Tibial artery (tissue), 4 donors: ENCODE measurements at regions of chr17 and their contacts with region 1.

Region 1: DNA sequence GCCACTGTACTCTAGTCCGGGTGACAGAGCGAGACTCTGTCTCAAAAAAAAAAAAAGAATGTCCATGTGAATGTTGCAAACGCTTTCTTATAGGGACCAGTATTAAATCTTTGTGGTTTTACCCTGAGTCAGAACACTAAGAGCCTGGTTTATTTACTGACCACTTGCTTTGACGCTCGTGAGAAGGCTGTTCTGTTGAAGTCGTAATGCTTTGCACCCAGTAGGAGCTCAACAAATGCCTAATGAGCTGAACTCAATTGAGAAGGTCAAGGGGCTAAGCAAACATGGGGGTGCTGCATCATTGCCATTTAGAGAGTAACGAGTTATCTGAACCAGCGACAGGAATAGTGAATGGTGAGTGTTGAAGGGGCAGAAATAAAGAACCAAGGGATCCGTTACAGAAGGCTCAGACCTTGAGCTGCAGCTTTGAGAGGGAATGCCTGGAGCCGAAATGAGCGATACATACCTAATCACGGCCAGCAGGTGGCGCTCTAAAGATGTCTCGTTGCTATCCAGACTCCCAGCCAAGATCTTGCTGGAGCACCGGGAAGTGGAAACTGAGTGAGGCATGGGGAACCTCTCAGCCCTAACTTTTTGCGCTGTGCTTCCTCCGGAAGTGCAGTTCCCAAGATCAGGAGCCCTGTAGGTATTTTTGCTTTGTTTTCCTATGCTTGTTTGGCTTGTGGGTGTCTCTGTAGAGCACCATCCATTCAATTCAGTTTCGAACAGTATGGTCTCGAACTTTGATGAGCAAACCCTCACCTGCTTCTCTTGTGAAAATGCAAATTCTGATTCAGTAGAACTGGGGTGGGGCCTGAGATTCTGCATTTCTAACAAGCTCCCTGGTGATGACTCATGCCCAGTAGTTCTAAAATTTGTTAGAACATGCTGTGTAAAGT is 12.6 kb upstream of the RNF222 start:
- DNase-seq: peak; percentile 87 to 93
- H3K4me3 ChIP-seq: no peak overlapping the region
- H3K27ac ChIP-seq: no peak overlapping the region
- H3K4me1 ChIP-seq: peaks cover 0 to 5% (median 1%) of the 10 kb centered on the region in 4 donors
- H3K27me3 ChIP-seq: peaks cover 0 to 3% of the 10 kb centered on the region in 2 donors
- CTCF ChIP-seq: peak; percentile 80 to 95

Region 2: DNA sequence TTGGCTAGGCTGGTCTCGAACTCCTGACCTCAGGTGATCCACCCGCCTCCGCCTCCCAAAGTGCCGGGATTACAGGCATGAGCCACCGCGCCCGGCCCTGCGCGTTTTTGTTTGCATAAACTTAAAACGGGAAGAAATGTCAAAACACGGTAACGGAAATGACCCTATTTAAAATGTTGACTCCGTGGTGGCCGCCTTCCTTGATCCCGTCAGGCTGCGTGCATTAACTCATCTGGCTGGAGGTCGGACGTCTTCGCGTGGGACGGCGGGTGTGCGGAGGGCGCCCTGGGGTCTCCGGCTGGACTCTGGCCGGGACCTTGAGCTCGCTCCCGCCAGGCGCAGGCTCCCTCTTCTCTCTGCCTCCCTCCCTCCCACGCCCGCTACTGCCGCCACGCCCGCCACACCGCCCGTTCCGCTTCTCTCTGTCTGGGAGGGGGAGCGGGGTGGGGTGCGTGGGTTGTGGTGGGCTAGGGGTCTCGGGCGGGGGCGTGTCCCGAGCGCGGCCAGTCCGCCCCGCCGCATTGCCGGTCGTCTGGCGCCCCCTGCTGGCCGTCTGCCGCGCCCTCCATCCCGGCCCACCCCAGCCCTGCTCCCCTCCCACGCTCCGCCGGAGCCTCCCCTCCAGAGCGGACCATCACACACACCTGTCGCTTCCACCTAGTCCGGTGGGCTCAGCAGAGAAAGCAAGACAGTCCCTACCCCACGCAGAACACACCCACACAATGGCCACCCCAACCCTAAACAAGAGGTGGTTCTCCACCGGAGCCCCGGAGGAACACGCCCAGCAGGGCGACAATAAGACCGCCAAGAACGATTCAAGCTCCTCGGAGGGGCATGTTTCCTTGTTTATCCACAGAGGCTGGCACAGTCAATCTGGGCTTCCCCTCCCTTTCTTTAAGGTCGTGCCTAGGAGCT is 335.6 kb after region 1 on chr17:
- intact Hi-C with region 1: loop called (anchors 10 kb)
- DNase-seq: peak; percentile 63 to 86
- H3K4me3 ChIP-seq: peak overlapping the region; percentile 60 to 78
- H3K27ac ChIP-seq: peak overlapping the region; percentile 76 to 87
- H3K4me1 ChIP-seq: peaks cover 0 to 33% (median 10%) of the 10 kb centered on the region in 4 donors
- H3K27me3 ChIP-seq: no peaks in the 10 kb centered on the region
- CTCF ChIP-seq: peak; percentile 76 to 97

Region 3: GRCh38 chr17:8785547-8786413 is 375.6 kb after region 1 on chr17:
- intact Hi-C with region 1: loop called (anchors 1 kb)
- DNase-seq: peak; percentile 88 to 92
- H3K4me3 ChIP-seq: no peak overlapping the region
- H3K27ac ChIP-seq: no peak overlapping the region
- H3K4me1 ChIP-seq: peaks cover 0 to 8% (median 4%) of the 10 kb centered on the region in 4 donors
- H3K27me3 ChIP-seq: no peaks in the 10 kb centered on the region
- CTCF ChIP-seq: peak; percentile 86 to 89